CD4-positive, alpha-beta memory T cell (primary cell): ENCODE measurements at regions of chr10 and their contacts with region 1.

Region 1: DNA sequence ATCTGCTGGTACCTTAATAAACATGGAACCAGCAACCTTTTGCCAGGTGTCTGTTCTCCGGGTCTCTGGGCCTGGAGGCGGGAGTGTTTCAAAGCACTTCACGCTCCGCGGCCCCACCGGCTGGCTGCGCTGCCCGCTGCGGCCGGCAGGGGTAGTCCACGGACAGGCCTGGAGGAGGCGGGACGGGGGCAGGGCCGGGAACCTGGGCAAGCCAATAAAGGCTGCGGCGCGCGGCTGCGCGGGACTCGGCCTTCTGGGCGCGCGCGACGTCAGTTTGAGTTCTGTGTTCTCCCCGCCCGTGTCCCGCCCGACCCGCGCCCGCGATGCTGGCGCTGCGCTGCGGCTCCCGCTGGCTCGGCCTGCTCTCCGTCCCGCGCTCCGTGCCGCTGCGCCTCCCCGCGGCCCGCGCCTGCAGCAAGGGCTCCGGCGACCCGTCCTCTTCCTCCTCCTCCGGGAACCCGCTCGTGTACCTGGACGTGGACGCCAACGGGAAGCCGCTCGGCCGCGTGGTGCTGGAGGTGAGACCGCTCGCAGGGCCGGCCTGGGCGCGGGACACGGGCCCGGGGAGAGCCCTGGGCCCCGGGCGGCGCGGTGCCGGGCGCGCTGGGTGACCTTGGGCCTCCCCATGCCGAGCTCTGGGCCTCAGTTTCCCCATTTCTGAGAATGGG is at the start of gene PPIF:
- DNase-seq: peak; percentile 85 to 92 (median 89)
- H3K4me3 ChIP-seq: peak within 1 kb of the TSS; percentile 47 to 79
- H3K4me3 Mint-ChIP-seq: peak within 1 kb of the TSS; percentile 77 to 84 (median 82)
- H3K27ac ChIP-seq: peak within 1 kb of the TSS; percentile 72
- H3K27ac Mint-ChIP-seq: peak within 1 kb of the TSS; percentile 83 to 95 (median 92)
- H3K4me1 ChIP-seq: peaks cover 43% of the 10 kb centered on the region
- H3K4me1 Mint-ChIP-seq: peaks cover 13 to 32% (median 23%) of the 10 kb centered on the region in 4 donors
- H3K27me3 ChIP-seq: no peaks in the 10 kb centered on the region
- H3K27me3 Mint-ChIP-seq: no peaks in the 10 kb centered on the region
- total RNA-seq, gene PPIF: 26.3 to 33.7 TPM

Region 2: DNA sequence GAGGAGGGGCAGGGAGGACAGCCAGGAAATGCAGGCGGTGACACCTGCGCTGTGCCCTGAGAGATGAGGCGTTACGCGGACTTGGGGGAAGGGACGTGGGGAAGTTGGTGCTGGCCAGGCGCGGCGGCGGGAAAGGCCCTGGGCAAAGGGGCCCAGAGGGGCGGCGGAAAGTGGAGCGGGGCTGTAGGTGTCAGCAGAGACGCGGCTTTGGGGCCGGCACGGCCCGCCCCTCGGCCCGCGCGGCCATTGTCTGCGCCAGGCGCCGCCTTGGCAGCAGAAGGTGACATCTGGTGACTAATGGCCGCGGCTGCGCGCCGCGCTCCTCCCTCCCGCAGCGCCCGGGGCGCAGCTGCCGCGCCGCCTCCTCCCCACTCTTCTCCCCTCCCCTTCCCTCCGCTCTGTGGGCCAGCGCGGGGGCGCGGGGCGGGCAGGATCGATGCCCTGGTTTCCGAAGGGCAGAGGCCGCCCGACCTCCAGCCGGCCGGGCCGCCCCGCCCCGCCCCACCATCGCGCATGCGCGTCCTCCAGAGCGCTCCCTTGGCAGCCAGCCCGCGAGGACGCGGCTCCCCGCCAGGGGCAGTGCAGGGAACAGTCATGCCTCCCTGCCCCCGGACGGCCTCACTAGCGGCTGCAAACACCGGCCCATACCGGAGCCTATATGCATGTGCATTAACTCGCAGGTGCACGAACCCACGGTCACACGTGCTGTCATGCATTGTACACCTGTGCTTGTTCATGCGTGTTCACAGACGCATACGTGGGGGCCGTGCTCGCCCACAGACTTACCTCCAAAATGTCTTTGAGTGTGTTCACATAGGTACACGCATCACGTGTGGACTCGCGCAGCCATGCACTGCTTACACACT is 1044.1 kb before region 1 on chr10:
- CTCF ChIA-PET with region 1: no interaction called
- POLR2A ChIA-PET with region 1: no interaction called
- intact Hi-C with region 1: loop called (anchors 1 kb)
- DNase-seq: peak; percentile 93 to 96 (median 95)
- H3K4me3 ChIP-seq: peak overlapping the region; percentile 67 to 70
- H3K4me3 Mint-ChIP-seq: peak overlapping the region; percentile 92 to 97 (median 94)
- H3K27ac ChIP-seq: peak overlapping the region; percentile 91
- H3K27ac Mint-ChIP-seq: peak overlapping the region; percentile 95 to 99 (median 98)
- H3K4me1 ChIP-seq: peaks cover 17% of the 10 kb centered on the region
- H3K4me1 Mint-ChIP-seq: peaks cover 7 to 24% (median 14%) of the 10 kb centered on the region in 4 donors
- H3K27me3 ChIP-seq: no peaks in the 10 kb centered on the region
- H3K27me3 Mint-ChIP-seq: peaks cover 0 to 2% of the 10 kb centered on the region in 2 donors

Region 3: GRCh38 chr10:79286318-79286951 is 60.9 kb before region 1 on chr10:
- CTCF ChIA-PET with region 1: interaction called, 22 read pairs
- POLR2A ChIA-PET with region 1: interaction called, 13 read pairs
- intact Hi-C with region 1: loop called (anchors 1 kb)
- DNase-seq: peak; percentile 52 to 94 (median 79)
- H3K4me3 ChIP-seq: peak overlapping the region in 1 of 2 donors; percentile 20
- H3K4me3 Mint-ChIP-seq: peak overlapping the region; percentile 7 to 91 (median 81)
- H3K27ac ChIP-seq: peak overlapping the region; percentile 54
- H3K27ac Mint-ChIP-seq: peak overlapping the region; percentile 89 to 96 (median 93)
- H3K4me1 ChIP-seq: peaks cover 41% of the 10 kb centered on the region
- H3K4me1 Mint-ChIP-seq: peaks cover 33 to 61% (median 38%) of the 10 kb centered on the region in 4 donors
- H3K27me3 ChIP-seq: no peaks in the 10 kb centered on the region
- H3K27me3 Mint-ChIP-seq: no peaks in the 10 kb centered on the region

Region 4: GRCh38 chr10:79316671-79317431 is 30.5 kb before region 1 on chr10:
- CTCF ChIA-PET with region 1: interaction called, 57 read pairs
- POLR2A ChIA-PET with region 1: interaction called, 80 read pairs
- intact Hi-C with region 1: loop called (anchors 1 kb)
- DNase-seq: peak in 2 of 5 donors; percentile 8 to 26
- H3K4me3 ChIP-seq: peak overlapping the region in 1 of 2 donors; percentile 27
- H3K4me3 Mint-ChIP-seq: peak overlapping the region; percentile 73 to 87 (median 82)
- H3K27ac ChIP-seq: no peak overlapping the region
- H3K27ac Mint-ChIP-seq: peak overlapping the region in 6 of 7 donors; percentile 61 to 97 (median 94)
- H3K4me1 ChIP-seq: peaks cover 67% of the 10 kb centered on the region
- H3K4me1 Mint-ChIP-seq: peaks cover 55 to 69% (median 60%) of the 10 kb centered on the region in 4 donors
- H3K27me3 ChIP-seq: no peaks in the 10 kb centered on the region
- H3K27me3 Mint-ChIP-seq: peaks cover 1 to 4% of the 10 kb centered on the region in 2 donors

Region 5: DNA sequence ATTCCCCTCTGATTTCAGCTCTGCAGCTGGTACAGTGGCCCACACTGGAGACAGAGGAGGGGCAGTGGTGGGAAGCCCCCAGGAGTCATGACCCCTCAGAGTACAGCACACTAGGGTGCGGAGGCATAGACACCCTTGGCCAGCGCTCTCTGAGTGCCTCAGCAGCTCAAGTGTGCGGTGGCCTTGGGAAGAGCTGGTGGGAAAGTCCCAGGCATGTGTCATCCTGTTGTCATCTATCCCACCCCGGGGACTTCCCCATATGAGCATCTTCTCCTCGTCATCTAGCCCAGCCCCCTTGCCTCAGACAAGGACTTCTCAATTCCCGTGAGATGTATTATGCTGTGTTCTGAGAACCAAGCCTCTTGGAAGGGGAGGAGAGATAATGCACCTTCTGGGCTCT is 15.7 kb before region 1 on chr10:
- CTCF ChIA-PET with region 1: interaction called, 24 read pairs
- POLR2A ChIA-PET with region 1: interaction called, 9 read pairs
- intact Hi-C with region 1: no loop called
- DNase-seq: peak; percentile 54 to 93 (median 65)
- H3K4me3 ChIP-seq: no peak overlapping the region
- H3K4me3 Mint-ChIP-seq: peak overlapping the region in 6 of 8 donors; percentile 21 to 67 (median 42)
- H3K27ac ChIP-seq: peak overlapping the region; percentile 29
- H3K27ac Mint-ChIP-seq: peak overlapping the region; percentile 76 to 95 (median 89)
- H3K4me1 ChIP-seq: peaks cover 20% of the 10 kb centered on the region
- H3K4me1 Mint-ChIP-seq: peaks cover 18 to 31% (median 20%) of the 10 kb centered on the region in 4 donors
- H3K27me3 ChIP-seq: no peaks in the 10 kb centered on the region
- H3K27me3 Mint-ChIP-seq: no peaks in the 10 kb centered on the region

Region 6: GRCh38 chr10:79445141-79445976 is 98.0 kb after region 1 on chr10 and contains the start of gene ZCCHC24:
- CTCF ChIA-PET with region 1: interaction called, 4 read pairs
- POLR2A ChIA-PET with region 1: interaction called, 7 read pairs
- intact Hi-C with region 1: loop called (anchors 1 kb)
- DNase-seq: peak; percentile 95 to 97 (median 97)
- H3K4me3 ChIP-seq: peak within 1 kb of the TSS; percentile 63 to 64
- H3K4me3 Mint-ChIP-seq: peak within 1 kb of the TSS; percentile 87 to 98 (median 90)
- H3K27ac ChIP-seq: peak within 1 kb of the TSS; percentile 57
- H3K27ac Mint-ChIP-seq: peak within 1 kb of the TSS; percentile 85 to 98 (median 91)
- H3K4me1 ChIP-seq: peaks cover 21% of the 10 kb centered on the region
- H3K4me1 Mint-ChIP-seq: peaks cover 17 to 34% (median 23%) of the 10 kb centered on the region in 4 donors
- H3K27me3 ChIP-seq: no peaks in the 10 kb centered on the region
- H3K27me3 Mint-ChIP-seq: no peaks in the 10 kb centered on the region
- total RNA-seq, gene ZCCHC24: 1.7 to 1.9 TPM